A673 (cell line): ENCODE measurements at regions of chr16 and their contacts with region 1.

Region 1: GRCh38 chr16:57648590-57649442 is 19.3 kb upstream of the ADGRG3 start:
- DNase-seq: peak; percentile 87
- H3K4me3 ChIP-seq: no peak overlapping the region
- H3K27ac ChIP-seq: no peak overlapping the region
- H3K4me1 ChIP-seq: no peaks in the 10 kb centered on the region
- H3K27me3 ChIP-seq: no peaks in the 10 kb centered on the region
- CTCF ChIP-seq: peak; percentile 100

Region 2: GRCh38 chr16:57576429-57576870 is 72.4 kb before region 1 on chr16:
- CTCF ChIA-PET with region 1: no interaction called
- POLR2A ChIA-PET with region 1: no interaction called
- intact Hi-C with region 1: loop called (anchors 1 kb)
- DNase-seq: peak; percentile 75
- H3K4me3 ChIP-seq: no peak overlapping the region
- H3K27ac ChIP-seq: no peak overlapping the region
- H3K4me1 ChIP-seq: no peaks in the 10 kb centered on the region
- H3K27me3 ChIP-seq: no peaks in the 10 kb centered on the region
- CTCF ChIP-seq: peak; percentile 97

Region 3: GRCh38 chr16:57591086-57591869 is 57.5 kb before region 1 on chr16:
- CTCF ChIA-PET with region 1: interaction called, 4 read pairs
- POLR2A ChIA-PET with region 1: no interaction called
- intact Hi-C with region 1: loop called (anchors 1 kb)
- DNase-seq: peak; percentile 84
- H3K4me3 ChIP-seq: no peak overlapping the region
- H3K27ac ChIP-seq: no peak overlapping the region
- H3K4me1 ChIP-seq: peaks cover 10% of the 10 kb centered on the region
- H3K27me3 ChIP-seq: no peaks in the 10 kb centered on the region
- CTCF ChIP-seq: peak; percentile 95

Region 4: GRCh38 chr16:58011652-58012051 is 362.8 kb after region 1 on chr16:
- CTCF ChIA-PET with region 1: no interaction called
- POLR2A ChIA-PET with region 1: no interaction called
- intact Hi-C with region 1: loop called (anchors 5 kb)
- DNase-seq: peak; percentile 29
- H3K4me3 ChIP-seq: no peak overlapping the region
- H3K27ac ChIP-seq: peak overlapping the region; percentile 30
- H3K4me1 ChIP-seq: peaks cover 5% of the 10 kb centered on the region
- H3K27me3 ChIP-seq: no peaks in the 10 kb centered on the region
- CTCF ChIP-seq: no peak

Region 5: GRCh38 chr16:58129097-58129936 is 480.5 kb after region 1 on chr16 and contains the start of gene CFAP20:
- CTCF ChIA-PET with region 1: interaction called, 10 read pairs
- POLR2A ChIA-PET with region 1: no interaction called
- intact Hi-C with region 1: no loop called
- DNase-seq: peak; percentile 100
- H3K4me3 ChIP-seq: peak within 1 kb of the TSS; percentile 95
- H3K27ac ChIP-seq: peak within 1 kb of the TSS; percentile 92
- H3K4me1 ChIP-seq: peaks cover 27% of the 10 kb centered on the region
- H3K27me3 ChIP-seq: no peaks in the 10 kb centered on the region
- CTCF ChIP-seq: no peak
- total RNA-seq, gene CFAP20: 66.3 and 81.6 TPM in 2 replicates